Psoas muscle (tissue), 8 donors: ENCODE measurements at regions of chr1 and their contacts with region 1.

Region 1: DNA sequence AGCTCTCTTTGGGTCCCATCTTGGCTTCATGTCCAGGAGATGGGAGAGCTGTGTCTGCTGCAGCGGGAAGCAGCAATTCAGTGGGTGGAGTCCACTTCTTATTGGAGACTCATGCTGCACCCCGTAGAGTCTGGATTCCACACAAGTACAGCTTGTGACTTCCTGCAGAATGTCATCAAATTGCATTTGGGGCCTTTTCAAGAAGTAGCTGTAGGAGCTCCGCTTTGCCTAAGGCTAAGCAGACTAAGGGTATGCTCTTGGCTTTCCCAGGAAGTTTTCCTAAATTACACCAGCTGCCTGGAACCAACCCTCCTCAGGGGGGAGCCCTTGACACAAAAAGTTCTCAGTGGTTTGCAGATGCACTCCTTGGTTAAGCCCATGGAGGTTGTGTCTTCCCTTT is 5.7 kb upstream of the MOB3C start:
- DNase-seq: no peak
- ATAC-seq: peak; percentile 59 to 82 (median 68)
- H3K4me3 ChIP-seq: no peak overlapping the region
- H3K27ac ChIP-seq: no peak overlapping the region
- H3K4me1 ChIP-seq: peaks cover under 1% of the 10 kb centered on the region
- H3K27me3 ChIP-seq: no peaks in the 10 kb centered on the region
- CTCF ChIP-seq: peak; percentile 51

Region 2: GRCh38 chr1:46724991-46725735 is 102.8 kb after region 1 on chr1:
- intact Hi-C with region 1: loop called (anchors 1 to 2 kb)
- DNase-seq: peak; percentile 38 to 70
- ATAC-seq: peak; percentile 89 to 99 (median 94)
- H3K4me3 ChIP-seq: no peak overlapping the region
- H3K27ac ChIP-seq: no peak overlapping the region
- H3K4me1 ChIP-seq: peaks cover 4% of the 10 kb centered on the region
- H3K27me3 ChIP-seq: peaks cover 0 to 6% (median 0%) of the 10 kb centered on the region in 3 donors
- CTCF ChIP-seq: peak; percentile 80

Region 3: DNA sequence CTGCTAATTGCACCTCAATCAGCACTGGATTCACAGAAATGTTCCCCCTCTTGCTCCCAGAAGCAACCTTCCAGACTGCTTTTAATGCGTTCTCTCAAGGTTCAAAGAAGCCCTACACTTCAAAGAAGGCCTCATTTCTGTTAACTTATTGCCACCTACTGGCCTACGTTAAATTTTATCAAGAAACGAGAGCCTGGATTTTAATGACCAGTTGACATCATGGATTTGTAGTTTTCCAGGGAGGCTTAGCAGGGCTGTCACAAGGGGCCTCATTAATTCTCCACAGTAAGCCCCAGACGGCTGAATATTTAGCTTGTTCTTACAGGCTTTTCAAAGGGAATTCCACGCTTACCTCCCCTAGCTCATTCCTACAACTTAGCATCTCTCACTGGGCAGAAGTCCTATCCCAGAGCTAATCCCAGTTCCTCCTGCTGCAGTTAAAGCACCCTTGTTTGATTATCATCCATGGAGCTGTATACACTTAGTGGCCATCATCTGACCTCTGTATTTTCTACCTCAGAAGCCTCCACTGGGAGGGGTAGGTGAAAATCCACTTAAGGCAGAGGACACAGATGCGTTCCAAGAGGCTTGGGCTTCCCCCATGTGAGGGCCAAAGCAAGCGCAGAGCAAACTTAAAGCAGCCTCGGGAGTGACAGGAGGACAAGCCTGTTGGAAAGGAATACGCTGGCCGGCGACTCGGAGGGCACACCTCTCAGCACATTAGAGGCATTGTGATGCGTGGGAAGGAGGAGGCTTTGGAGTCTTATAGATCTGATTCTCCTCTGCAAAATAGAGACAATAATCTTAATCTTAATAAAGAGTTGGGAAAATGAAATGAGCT is 369.0 kb after region 1 on chr1:
- intact Hi-C with region 1: no loop called
- DNase-seq: no peak
- ATAC-seq: no peak
- H3K4me3 ChIP-seq: no peak overlapping the region
- H3K27ac ChIP-seq: no peak overlapping the region
- H3K4me1 ChIP-seq: no peaks in the 10 kb centered on the region
- H3K27me3 ChIP-seq: no peaks in the 10 kb centered on the region
- CTCF ChIP-seq: peak; percentile 21